Caki2 (cell line): ENCODE measurements at regions of chr17 and their contacts with region 1.

Region 1: GRCh38 chr17:50638851-50639767 is 4.4 kb downstream of the ABCC3 start:
- DNase-seq: peak; percentile 98

Region 2: GRCh38 chr17:50699410-50700074 is 60.4 kb after region 1 on chr17:
- in situ Hi-C with region 1: loop called (anchors 5 kb)
- DNase-seq: no peak